ENCODE measurements at regions of chr1 and their contacts with region 1.

Region 1: GRCh38 chr1:223683586-223684487 is 18.3 kb upstream of the CAPN8 start:
- DNase-seq: peak in 1 of 2 experiments; percentile 78
- H3K4me3 ChIP-seq: no peak overlapping the region
- H3K27ac ChIP-seq: no peak overlapping the region
- H3K4me1 ChIP-seq: no peaks in the 10 kb centered on the region
- H3K27me3 ChIP-seq: no peaks in the 10 kb centered on the region
- CTCF ChIP-seq: peak; percentile 48 to 89 (median 87)
- EP300 ChIP-seq: no peak
- POLR2A ChIP-seq: no peak
- RAD21 ChIP-seq: peak; percentile 97 to 98

Region 2: DNA sequence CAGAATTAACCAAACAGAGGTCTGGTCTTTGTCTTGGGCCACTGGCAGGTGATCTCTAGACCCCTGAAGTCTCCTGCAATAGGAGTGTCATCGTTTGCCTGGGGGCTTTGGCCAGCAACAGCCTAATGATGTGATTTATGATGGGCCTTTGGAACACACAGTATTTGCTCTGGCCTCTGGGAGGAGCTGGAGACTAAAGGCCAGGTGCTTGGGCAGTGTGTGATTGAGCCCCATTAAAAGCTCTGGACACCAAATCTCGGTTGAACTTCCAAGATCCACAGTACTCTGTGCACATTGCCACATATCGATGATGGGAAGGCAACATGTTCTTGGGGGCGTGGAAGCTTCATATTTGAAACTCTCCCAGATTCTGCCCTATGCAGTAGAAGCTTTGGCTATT is 508.8 kb before region 1 on chr1:
- CTCF ChIA-PET with region 1: interaction called, 24 read pairs
- POLR2A ChIA-PET with region 1: no interaction called
- DNase-seq: no peak
- H3K4me3 ChIP-seq: no peak overlapping the region
- H3K27ac ChIP-seq: no peak overlapping the region
- H3K4me1 ChIP-seq: no peaks in the 10 kb centered on the region
- H3K27me3 ChIP-seq: no peaks in the 10 kb centered on the region; a peak in 1 of 7 replicates
- CTCF ChIP-seq: peak; percentile 35 to 60 (median 55)
- EP300 ChIP-seq: no peak
- POLR2A ChIP-seq: no peak
- RAD21 ChIP-seq: peak; percentile 81 to 85

Region 3: GRCh38 chr1:223531742-223532341 is 152.0 kb before region 1 on chr1:
- CTCF ChIA-PET with region 1: interaction called, 18 read pairs
- POLR2A ChIA-PET with region 1: no interaction called
- DNase-seq: peak; percentile 50 to 90
- H3K4me3 ChIP-seq: no peak overlapping the region
- H3K27ac ChIP-seq: no peak overlapping the region
- H3K4me1 ChIP-seq: peaks cover 0 to 2% (median 0%) of the 10 kb centered on the region in 4 experiments; a peak in 1 of 7 replicates
- H3K27me3 ChIP-seq: no peaks in the 10 kb centered on the region
- CTCF ChIP-seq: peak; percentile 80 to 98 (median 93)
- EP300 ChIP-seq: no peak
- POLR2A ChIP-seq: no peak
- RAD21 ChIP-seq: peak; percentile 82 to 85

Region 4: GRCh38 chr1:223611936-223612335 is 71.9 kb before region 1 on chr1:
- CTCF ChIA-PET with region 1: interaction called, 25 read pairs
- POLR2A ChIA-PET with region 1: no interaction called
- DNase-seq: no peak
- H3K4me3 ChIP-seq: no peak overlapping the region
- H3K27ac ChIP-seq: no peak overlapping the region
- H3K4me1 ChIP-seq: no peaks in the 10 kb centered on the region
- H3K27me3 ChIP-seq: no peaks in the 10 kb centered on the region; a peak in 1 of 7 replicates
- CTCF ChIP-seq: no peak
- EP300 ChIP-seq: no peak
- POLR2A ChIP-seq: no peak
- RAD21 ChIP-seq: no peak

Region 5: DNA sequence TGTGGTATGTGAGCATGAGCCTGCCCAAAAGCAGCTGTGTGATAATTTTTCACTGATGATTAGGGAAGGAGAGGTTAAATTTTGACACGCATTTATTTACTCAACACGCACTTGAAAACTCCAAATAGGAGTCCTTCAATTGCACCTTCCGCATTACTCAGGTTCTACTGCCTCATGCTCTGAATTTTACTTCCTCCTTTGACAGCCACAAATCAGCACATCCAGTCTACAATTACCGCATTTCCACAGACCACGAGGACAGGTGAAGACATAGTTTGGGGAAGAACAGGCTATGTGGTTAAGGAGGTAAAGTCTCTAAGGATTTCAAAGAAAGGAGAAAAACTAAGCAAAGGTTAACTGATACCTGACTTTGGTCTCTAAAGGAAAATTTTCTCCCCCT is 20.9 kb before region 1 on chr1:
- CTCF ChIA-PET with region 1: interaction called, 60 read pairs
- POLR2A ChIA-PET with region 1: no interaction called
- DNase-seq: no peak
- H3K4me3 ChIP-seq: no peak overlapping the region
- H3K27ac ChIP-seq: no peak overlapping the region
- H3K4me1 ChIP-seq: no peaks in the 10 kb centered on the region
- H3K27me3 ChIP-seq: no peaks in the 10 kb centered on the region
- CTCF ChIP-seq: no peak
- EP300 ChIP-seq: no peak
- POLR2A ChIP-seq: no peak
- RAD21 ChIP-seq: no peak

Region 6: DNA sequence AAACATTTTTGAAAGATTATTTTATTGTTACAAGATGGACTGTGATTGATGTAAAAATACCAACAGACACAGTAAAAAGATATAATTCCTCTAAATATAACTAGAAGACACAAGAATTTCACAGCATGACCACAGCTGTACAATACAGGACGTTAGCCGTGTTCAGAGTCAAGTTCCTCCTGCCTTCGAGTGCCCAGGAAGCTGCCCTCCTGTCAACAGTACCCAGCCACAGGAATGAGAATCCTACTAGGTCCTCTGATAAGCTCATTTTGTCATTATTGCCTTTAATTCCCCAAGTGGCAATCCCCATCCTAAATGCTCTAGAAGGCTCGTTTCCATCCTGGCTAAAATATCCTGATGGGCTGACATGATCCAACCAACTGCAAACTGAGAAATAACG is 12.1 kb after region 1 on chr1:
- CTCF ChIA-PET with region 1: interaction called, 11 read pairs
- POLR2A ChIA-PET with region 1: no interaction called
- DNase-seq: no peak
- H3K4me3 ChIP-seq: no peak overlapping the region
- H3K27ac ChIP-seq: no peak overlapping the region
- H3K4me1 ChIP-seq: peaks cover 0 to 2% (median 0%) of the 10 kb centered on the region in 4 experiments; a peak in 1 of 7 replicates
- H3K27me3 ChIP-seq: no peaks in the 10 kb centered on the region
- CTCF ChIP-seq: no peak
- EP300 ChIP-seq: no peak
- POLR2A ChIP-seq: no peak
- RAD21 ChIP-seq: no peak

Region 7: DNA sequence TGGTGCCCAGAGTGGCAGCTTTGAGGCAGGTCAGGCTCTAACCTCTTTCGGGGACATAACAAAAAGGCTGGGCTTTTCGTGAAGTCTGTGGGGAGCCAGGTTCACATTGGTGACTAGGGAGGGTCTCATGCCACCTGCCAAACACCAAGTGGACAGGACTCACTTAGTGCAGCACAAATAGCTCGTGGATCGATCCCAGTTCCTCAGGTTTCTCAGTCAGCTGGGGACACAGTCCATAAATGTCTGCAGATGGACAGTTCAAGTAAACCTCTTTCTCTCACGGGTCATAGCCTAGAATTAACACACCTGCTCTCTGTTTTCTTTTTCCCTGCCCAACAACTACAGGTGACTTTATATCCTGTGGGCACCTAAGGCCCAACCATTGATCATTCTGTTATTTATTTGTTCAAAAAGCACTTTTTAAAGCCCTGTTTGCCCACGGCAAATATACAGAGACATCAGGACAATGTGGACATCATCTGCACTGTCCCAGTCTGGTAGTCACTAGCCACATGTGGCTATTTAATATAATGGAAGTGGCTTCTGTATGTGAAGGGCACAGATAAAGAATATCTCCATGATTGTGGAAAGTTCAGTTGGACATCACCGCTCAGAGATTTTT is 82.0 kb after region 1 on chr1:
- CTCF ChIA-PET with region 1: no interaction called
- POLR2A ChIA-PET with region 1: no interaction called
- DNase-seq: no peak
- H3K4me3 ChIP-seq: no peak overlapping the region
- H3K27ac ChIP-seq: no peak overlapping the region
- H3K4me1 ChIP-seq: no peaks in the 10 kb centered on the region
- H3K27me3 ChIP-seq: no peaks in the 10 kb centered on the region
- CTCF ChIP-seq: no peak
- EP300 ChIP-seq: no peak
- POLR2A ChIP-seq: no peak
- RAD21 ChIP-seq: no peak